Astrocyte of the cerebellum (primary cell): ENCODE measurements at regions of chr19 and their contacts with region 1.

Region 1: GRCh38 chr19:35352448-35353304 is 5.0 kb downstream of the FFAR1 start:
- DNase-seq: peak; percentile 26
- H3K4me3 ChIP-seq: no peak overlapping the region
- CTCF ChIP-seq: peak; percentile 82

Region 2: GRCh38 chr19:35430409-35431144 is 77.9 kb after region 1 on chr19:
- in situ Hi-C with region 1: loop called (anchors 5 kb)
- DNase-seq: no peak
- H3K4me3 ChIP-seq: no peak overlapping the region
- CTCF ChIP-seq: no peak

Region 3: GRCh38 chr19:35509861-35510625 is 157.4 kb after region 1 on chr19:
- in situ Hi-C with region 1: loop called (anchors 5 kb)
- DNase-seq: no peak
- H3K4me3 ChIP-seq: peak overlapping the region; percentile 13
- CTCF ChIP-seq: peak; percentile 85